ENCODE measurements at regions of chr7 and their contacts with region 1.

Region 1: GRCh38 chr7:36670585-36671431 is 53.5 kb downstream of the AOAH start:
- DNase-seq: peak; percentile 28
- ATAC-seq: peak; percentile 95
- H3K4me3 ChIP-seq: no peak overlapping the region
- H3K27ac ChIP-seq: no peak overlapping the region
- H3K4me1 ChIP-seq: no peaks in the 10 kb centered on the region
- H3K27me3 ChIP-seq: peaks cover 0 to 6% of the 10 kb centered on the region in 2 experiments; a peak in 1 of 4 replicates
- CTCF ChIP-seq: peak; percentile 83 to 88 (median 86)
- EP300 ChIP-seq: no peak
- POLR2A ChIP-seq: no peak
- RAD21 ChIP-seq: peak; percentile 81

Region 2: DNA sequence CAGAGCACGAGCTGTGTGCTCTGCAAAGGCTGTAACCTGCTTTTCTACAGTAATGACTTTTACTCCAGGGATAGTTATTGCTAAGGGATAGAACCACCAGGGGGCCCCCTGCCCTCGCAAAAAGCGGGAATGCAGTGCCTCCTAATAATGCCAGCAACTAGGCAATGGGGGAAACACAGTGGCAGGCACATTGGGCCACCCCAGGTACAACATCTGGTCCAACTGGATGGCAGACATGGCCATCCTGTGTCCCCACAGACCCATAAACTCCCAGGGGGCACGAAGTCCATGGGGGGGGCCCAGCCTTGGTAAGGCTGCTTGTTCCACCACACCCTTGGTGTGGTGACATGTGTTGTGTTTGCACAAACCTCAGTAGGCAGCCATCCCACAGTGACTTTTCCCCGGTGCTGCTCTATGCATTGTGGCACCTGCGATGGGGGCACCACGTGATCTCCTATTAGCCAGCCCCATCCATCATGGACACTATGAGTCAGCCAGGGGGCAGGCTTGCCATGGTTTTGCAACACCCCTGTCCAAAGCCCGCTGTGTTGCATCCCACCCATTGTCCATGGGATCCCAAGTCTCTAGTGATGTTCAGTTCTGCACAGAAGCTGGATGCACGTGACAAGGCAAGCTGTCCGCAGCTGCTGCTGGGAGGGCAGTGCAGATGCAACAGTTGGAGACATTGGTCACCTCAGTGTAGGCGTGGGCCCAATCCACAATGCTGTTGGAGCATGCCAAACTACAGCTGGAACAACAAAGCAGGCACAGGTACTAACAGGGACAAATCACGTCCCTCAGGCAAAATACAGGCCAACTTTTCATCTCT is 197.1 kb before region 1 on chr7:
- CTCF ChIA-PET with region 1: interaction called, 13 read pairs
- POLR2A ChIA-PET with region 1: no interaction called
- RAD21 ChIA-PET with region 1: interaction called, 3 read pairs
- SMC1A ChIA-PET with region 1: interaction called, 3 read pairs
- in situ Hi-C with region 1: no loop called
- intact Hi-C with region 1: loop called (anchors 1 kb)
- DNase-seq: no peak
- ATAC-seq: peak; percentile 82
- H3K4me3 ChIP-seq: no peak overlapping the region
- H3K27ac ChIP-seq: no peak overlapping the region
- H3K4me1 ChIP-seq: no peaks in the 10 kb centered on the region
- H3K27me3 ChIP-seq: no peaks in the 10 kb centered on the region
- CTCF ChIP-seq: peak; percentile 50 to 55 (median 54)
- EP300 ChIP-seq: no peak
- POLR2A ChIP-seq: no peak
- RAD21 ChIP-seq: peak; percentile 59

Region 3: DNA sequence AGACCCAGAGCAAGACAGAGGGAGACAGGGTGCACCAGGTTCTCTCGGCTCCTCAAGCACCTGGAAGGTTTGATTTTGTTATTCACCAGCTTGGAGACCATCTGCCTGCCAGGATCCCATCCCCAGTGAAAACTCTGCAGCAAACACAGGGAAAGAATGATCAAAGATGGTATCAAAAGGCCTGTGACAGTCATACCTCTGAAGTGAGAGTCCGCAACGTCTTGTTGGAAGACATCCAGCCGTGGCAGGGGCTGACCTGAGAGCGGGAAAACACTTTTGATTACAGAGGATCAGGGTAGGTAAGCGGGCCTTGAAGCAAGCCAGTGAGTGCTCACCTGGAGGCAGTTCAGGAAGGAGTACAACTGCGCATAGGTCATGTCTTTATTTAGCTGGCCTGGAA is 138.9 kb before region 1 on chr7:
- CTCF ChIA-PET with region 1: no interaction called
- POLR2A ChIA-PET with region 1: no interaction called
- RAD21 ChIA-PET with region 1: no interaction called
- SMC1A ChIA-PET with region 1: no interaction called
- in situ Hi-C with region 1: no loop called
- intact Hi-C with region 1: no loop called
- DNase-seq: no peak
- ATAC-seq: no peak
- H3K4me3 ChIP-seq: no peak overlapping the region
- H3K27ac ChIP-seq: no peak overlapping the region
- H3K4me1 ChIP-seq: peaks cover 1% of the 10 kb centered on the region; the same call in 1 of the 2 replicates
- H3K27me3 ChIP-seq: no peaks in the 10 kb centered on the region; a peak in 1 of 4 replicates
- CTCF ChIP-seq: no peak
- EP300 ChIP-seq: no peak
- POLR2A ChIP-seq: no peak
- RAD21 ChIP-seq: no peak

Region 4: DNA sequence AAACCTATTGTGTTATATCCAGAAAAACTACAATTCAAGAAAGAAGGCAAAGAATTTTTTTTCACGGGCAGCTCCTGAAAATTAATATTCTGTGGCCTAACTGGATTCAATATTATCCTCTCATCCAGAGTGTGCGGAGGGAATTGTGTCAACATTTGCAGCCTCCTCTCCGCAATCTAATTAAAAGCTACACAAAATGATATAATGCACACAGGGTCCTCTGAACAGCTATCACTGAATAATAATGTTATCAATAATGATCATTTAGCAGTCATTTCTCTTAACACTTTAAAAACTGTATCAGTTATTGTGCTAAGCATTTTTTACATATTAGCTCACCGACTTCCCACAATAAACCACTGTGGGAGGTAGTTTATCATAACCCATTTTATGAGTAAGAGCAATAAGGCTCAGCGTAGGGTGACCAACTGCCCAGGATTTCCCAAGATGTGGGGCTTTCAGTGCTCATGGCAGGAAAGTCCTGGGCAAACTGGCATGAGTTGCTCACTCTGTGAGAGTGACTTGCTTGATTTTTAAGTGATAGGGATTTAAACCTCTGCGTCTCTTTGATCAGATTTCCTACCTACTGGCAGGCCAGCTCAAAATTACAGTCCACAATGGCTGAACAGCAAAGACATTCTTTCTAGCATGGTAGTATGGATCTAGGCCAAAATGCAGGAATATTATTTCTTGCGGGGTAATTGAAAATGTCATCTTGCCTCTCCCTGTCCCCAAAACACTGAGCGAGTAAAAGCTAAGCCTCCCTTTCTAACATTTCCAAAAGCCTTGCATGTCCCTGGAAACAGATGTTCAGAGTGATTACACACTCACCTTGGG is 12.3 kb before region 1 on chr7:
- CTCF ChIA-PET with region 1: interaction called, 19 read pairs
- POLR2A ChIA-PET with region 1: no interaction called
- RAD21 ChIA-PET with region 1: interaction called, 3 read pairs
- SMC1A ChIA-PET with region 1: interaction called, 5 read pairs
- in situ Hi-C with region 1: no loop called
- intact Hi-C with region 1: no loop called
- DNase-seq: no peak
- ATAC-seq: no peak
- H3K4me3 ChIP-seq: no peak overlapping the region
- H3K27ac ChIP-seq: no peak overlapping the region
- H3K4me1 ChIP-seq: no peaks in the 10 kb centered on the region
- H3K27me3 ChIP-seq: no peaks in the 10 kb centered on the region
- CTCF ChIP-seq: no peak
- EP300 ChIP-seq: no peak
- POLR2A ChIP-seq: no peak
- RAD21 ChIP-seq: no peak

Region 5: GRCh38 chr7:36787933-36788378 is 117.1 kb after region 1 on chr7:
- CTCF ChIA-PET with region 1: interaction called, 4 read pairs
- POLR2A ChIA-PET with region 1: no interaction called
- RAD21 ChIA-PET with region 1: no interaction called
- SMC1A ChIA-PET with region 1: interaction called, 3 read pairs
- in situ Hi-C with region 1: no loop called
- intact Hi-C with region 1: loop called (anchors 2 kb)
- DNase-seq: peak; percentile 42
- ATAC-seq: peak; percentile 75
- H3K4me3 ChIP-seq: no peak overlapping the region
- H3K27ac ChIP-seq: no peak overlapping the region
- H3K4me1 ChIP-seq: peaks cover 13% of the 10 kb centered on the region
- H3K27me3 ChIP-seq: no peaks in the 10 kb centered on the region
- CTCF ChIP-seq: no peak
- EP300 ChIP-seq: peak; percentile 54 to 64; a peak in 2 of 4 replicates
- POLR2A ChIP-seq: no peak
- RAD21 ChIP-seq: no peak